ENCODE measurements at regions of chr1 and their contacts with region 1.

Region 1: GRCh38 chr1:32933742-32934322 is 30.8 kb downstream of the RNF19B start:
- DNase-seq: no peak
- ATAC-seq: peak; percentile 46
- H3K4me3 ChIP-seq: no peak overlapping the region
- H3K27ac ChIP-seq: no peak overlapping the region
- H3K4me1 ChIP-seq: no peaks in the 10 kb centered on the region
- H3K27me3 ChIP-seq: no peaks in the 10 kb centered on the region
- CTCF ChIP-seq: no peak
- EP300 ChIP-seq: no peak
- POLR2A ChIP-seq: no peak
- RAD21 ChIP-seq: no peak

Region 2: GRCh38 chr1:32919811-32920733 is 13.8 kb before region 1 on chr1:
- CTCF ChIA-PET with region 1: interaction called, 11 read pairs
- POLR2A ChIA-PET with region 1: no interaction called
- RAD21 ChIA-PET with region 1: interaction called, 3 read pairs
- SMC1A ChIA-PET with region 1: interaction called, 3 read pairs
- in situ Hi-C with region 1: no loop called
- intact Hi-C with region 1: no loop called
- DNase-seq: no peak
- ATAC-seq: peak; percentile 44
- H3K4me3 ChIP-seq: no peak overlapping the region
- H3K27ac ChIP-seq: no peak overlapping the region
- H3K4me1 ChIP-seq: no peaks in the 10 kb centered on the region; the same call in 1 of the 2 replicates
- H3K27me3 ChIP-seq: peaks cover 0 to 4% of the 10 kb centered on the region in 2 experiments; a peak in 2 of 4 replicates
- CTCF ChIP-seq: no peak
- EP300 ChIP-seq: no peak
- POLR2A ChIP-seq: no peak
- RAD21 ChIP-seq: no peak

Region 3: GRCh38 chr1:32964461-32965250 is 30.8 kb after region 1 on chr1 and contains the start of gene RNF19B:
- CTCF ChIA-PET with region 1: interaction called, 12 read pairs
- POLR2A ChIA-PET with region 1: interaction called, 5 read pairs
- RAD21 ChIA-PET with region 1: interaction called, 4 read pairs
- SMC1A ChIA-PET with region 1: interaction called, 4 read pairs
- in situ Hi-C with region 1: no loop called
- intact Hi-C with region 1: no loop called
- DNase-seq: peak; percentile 77
- ATAC-seq: peak; percentile 93
- H3K4me3 ChIP-seq: peak within 1 kb of the TSS; percentile 79
- H3K27ac ChIP-seq: peak within 1 kb of the TSS; percentile 27
- H3K4me1 ChIP-seq: peaks cover 4% of the 10 kb centered on the region; the same call in 1 of the 2 replicates
- H3K27me3 ChIP-seq: no peaks in the 10 kb centered on the region
- CTCF ChIP-seq: no peak
- EP300 ChIP-seq: peak in 1 of 2 experiments; percentile 14; a peak in 1 of 4 replicates
- POLR2A ChIP-seq: peak; percentile 95
- RAD21 ChIP-seq: no peak
- polyA plus RNA-seq, gene RNF19B: 4.3 to 9.1 TPM

Region 4: DNA sequence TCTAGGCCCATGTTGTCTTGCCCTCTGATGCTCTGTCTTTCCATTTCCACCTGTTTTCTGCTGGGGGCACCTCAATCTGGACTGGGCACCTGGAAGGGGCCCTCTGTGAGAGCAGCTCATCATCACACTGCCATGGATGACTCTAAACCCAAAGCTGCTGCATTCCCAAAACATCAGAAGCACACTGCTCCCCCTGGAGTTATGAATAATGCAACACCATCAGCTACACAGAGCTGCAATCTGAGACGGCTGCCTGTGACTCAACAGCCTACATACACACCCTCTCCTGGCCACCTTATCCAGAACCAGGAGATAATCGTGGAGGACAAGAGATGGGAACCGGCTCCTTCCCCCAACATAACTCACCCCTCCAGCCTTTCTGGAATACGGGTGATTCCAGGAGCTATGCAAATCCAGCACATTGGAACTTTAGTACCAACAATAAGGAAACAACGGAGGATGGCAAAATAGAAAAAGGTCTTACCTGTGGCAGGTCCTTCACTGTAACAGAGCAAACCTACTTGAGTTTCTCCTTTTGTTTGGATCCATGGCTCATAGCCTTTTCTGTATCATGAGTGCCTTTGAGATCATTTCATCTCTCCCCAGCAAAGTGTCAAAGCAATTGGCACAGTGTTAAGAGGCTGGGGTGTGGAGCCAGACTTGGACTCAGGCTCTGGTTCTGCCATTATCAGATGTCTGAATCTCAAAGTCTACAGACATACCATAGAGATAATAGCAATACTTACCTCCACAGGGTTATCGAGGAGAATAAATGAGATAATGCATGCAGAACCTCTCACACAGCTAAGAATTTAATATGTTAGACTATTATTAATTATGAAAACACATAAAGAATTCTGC is 73.6 kb after region 1 on chr1:
- CTCF ChIA-PET with region 1: interaction called, 66 read pairs
- POLR2A ChIA-PET with region 1: interaction called, 3 read pairs
- RAD21 ChIA-PET with region 1: interaction called, 22 read pairs
- SMC1A ChIA-PET with region 1: interaction called, 51 read pairs
- in situ Hi-C with region 1: loop called (anchors 5 kb)
- intact Hi-C with region 1: loop called (anchors 1 kb)
- DNase-seq: no peak
- ATAC-seq: peak; percentile 76
- H3K4me3 ChIP-seq: no peak overlapping the region
- H3K27ac ChIP-seq: no peak overlapping the region
- H3K4me1 ChIP-seq: peaks cover 5% of the 10 kb centered on the region; the same call in 1 of the 2 replicates
- H3K27me3 ChIP-seq: no peaks in the 10 kb centered on the region
- CTCF ChIP-seq: peak; percentile 17 to 36 (median 18); a peak in 3 of 6 replicates
- EP300 ChIP-seq: no peak
- POLR2A ChIP-seq: no peak; the same call in 1 of the 2 replicates
- RAD21 ChIP-seq: peak; percentile 57

Region 5: GRCh38 chr1:33030575-33030974 is 96.7 kb after region 1 on chr1:
- CTCF ChIA-PET with region 1: interaction called, 10 read pairs
- POLR2A ChIA-PET with region 1: no interaction called
- RAD21 ChIA-PET with region 1: interaction called, 3 read pairs
- SMC1A ChIA-PET with region 1: interaction called, 53 read pairs
- in situ Hi-C with region 1: no loop called
- intact Hi-C with region 1: no loop called
- DNase-seq: no peak
- ATAC-seq: no peak
- H3K4me3 ChIP-seq: no peak overlapping the region
- H3K27ac ChIP-seq: no peak overlapping the region
- H3K4me1 ChIP-seq: peaks cover 20% of the 10 kb centered on the region
- H3K27me3 ChIP-seq: no peaks in the 10 kb centered on the region
- CTCF ChIP-seq: no peak
- EP300 ChIP-seq: no peak
- POLR2A ChIP-seq: no peak
- RAD21 ChIP-seq: no peak

Region 6: GRCh38 chr1:33055210-33056008 is 121.6 kb after region 1 on chr1:
- CTCF ChIA-PET with region 1: interaction called, 183 read pairs
- POLR2A ChIA-PET with region 1: interaction called, 3 read pairs
- RAD21 ChIA-PET with region 1: interaction called, 67 read pairs
- SMC1A ChIA-PET with region 1: interaction called, 110 read pairs
- in situ Hi-C with region 1: loop called (anchors 5 kb)
- intact Hi-C with region 1: loop called (anchors 1 kb)
- DNase-seq: peak; percentile 15
- ATAC-seq: peak; percentile 91
- H3K4me3 ChIP-seq: no peak overlapping the region
- H3K27ac ChIP-seq: no peak overlapping the region
- H3K4me1 ChIP-seq: peaks cover 9% of the 10 kb centered on the region
- H3K27me3 ChIP-seq: no peaks in the 10 kb centered on the region
- CTCF ChIP-seq: peak; percentile 67 to 74 (median 74)
- EP300 ChIP-seq: no peak
- POLR2A ChIP-seq: no peak
- RAD21 ChIP-seq: peak; percentile 64

Region 7: GRCh38 chr1:33086384-33086850 is 152.6 kb after region 1 on chr1:
- CTCF ChIA-PET with region 1: interaction called, 55 read pairs
- POLR2A ChIA-PET with region 1: interaction called, 3 read pairs
- RAD21 ChIA-PET with region 1: interaction called, 42 read pairs
- SMC1A ChIA-PET with region 1: interaction called, 34 read pairs
- in situ Hi-C with region 1: no loop called
- intact Hi-C with region 1: loop called (anchors 1 kb)
- DNase-seq: peak; percentile 5
- ATAC-seq: peak; percentile 90
- H3K4me3 ChIP-seq: no peak overlapping the region
- H3K27ac ChIP-seq: no peak overlapping the region
- H3K4me1 ChIP-seq: peaks cover 14% of the 10 kb centered on the region
- H3K27me3 ChIP-seq: peaks cover 8 to 12% of the 10 kb centered on the region in 2 experiments
- CTCF ChIP-seq: peak; percentile 74 to 83 (median 75)
- EP300 ChIP-seq: no peak
- POLR2A ChIP-seq: no peak
- RAD21 ChIP-seq: peak; percentile 82

Measured in GM12878 (cell line).